Adrenal gland (tissue), 19 donors: ENCODE measurements at regions of chr15 and their contacts with region 1.

Region 1: DNA sequence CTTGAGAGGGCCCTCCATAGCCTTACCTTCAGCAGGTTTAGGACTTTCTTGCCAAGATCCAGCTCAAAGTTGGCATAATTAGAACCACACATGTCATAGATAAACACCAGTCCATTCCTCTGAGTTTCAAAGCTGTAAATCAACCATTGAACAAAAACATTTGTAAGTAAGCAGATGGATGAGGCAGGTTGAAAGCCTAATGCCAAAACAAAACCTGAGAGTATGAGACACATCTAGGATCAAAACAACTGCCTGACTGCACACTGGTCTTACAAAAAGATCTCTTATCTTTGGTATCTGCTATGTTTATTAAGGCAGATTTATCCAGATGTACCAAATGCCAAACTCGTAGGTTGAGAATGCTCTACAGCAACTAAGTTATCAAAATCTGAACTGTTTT is 61.9 kb downstream of the PTPN9 start:
- DNase-seq: no peak
- H3K4me3 ChIP-seq: no peak overlapping the region
- H3K27ac ChIP-seq: peak overlapping the region in 1 of 5 donors; percentile 25
- H3K4me1 ChIP-seq: no peaks in the 10 kb centered on the region
- H3K27me3 ChIP-seq: no peaks in the 10 kb centered on the region
- CTCF ChIP-seq: no peak
- POLR2A ChIP-seq: no peak

Region 2: DNA sequence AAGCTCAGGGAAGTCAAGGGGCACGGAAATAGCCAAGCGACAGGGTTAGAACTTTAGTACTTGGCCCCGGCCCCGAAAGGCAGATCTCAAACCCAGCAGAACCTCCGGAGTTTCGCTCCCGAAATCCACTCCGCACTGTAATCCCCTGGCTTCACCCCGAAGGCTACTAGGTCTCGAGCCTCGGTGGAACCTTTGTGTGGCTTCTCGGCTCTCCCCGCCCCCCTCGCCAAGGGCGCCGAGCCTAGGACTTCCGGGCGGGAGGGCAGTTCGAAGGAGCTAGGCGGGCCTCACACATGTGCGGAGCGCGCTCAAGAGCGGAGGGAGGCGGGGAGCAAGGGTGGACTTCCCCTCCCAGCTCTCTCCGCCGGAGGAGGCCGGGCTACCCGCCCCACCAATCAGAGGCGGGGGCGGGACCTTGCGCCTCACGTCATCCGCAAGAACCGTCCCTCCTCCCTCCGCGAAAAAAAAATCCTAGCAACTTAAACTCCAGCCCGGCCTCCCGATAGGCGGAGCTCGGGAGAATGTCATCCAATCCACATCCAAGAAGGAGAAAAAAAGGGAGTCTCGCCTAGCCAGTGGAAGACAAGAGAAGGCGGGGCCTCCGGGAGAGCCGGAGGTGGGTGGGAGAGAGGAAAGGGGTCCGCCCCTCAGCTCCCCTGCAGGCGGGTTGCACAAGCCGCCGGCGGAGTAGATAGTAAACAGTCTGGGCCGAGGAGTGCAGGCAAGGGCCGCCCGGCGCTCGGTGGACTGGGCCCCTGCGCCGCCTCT is 63.3 kb before region 1 on chr15:
- intact Hi-C with region 1: loop called in 1 of 2 experiments (anchors 10 kb)
- DNase-seq: peak; percentile 97 to 99 (median 99)
- H3K4me3 ChIP-seq: peak overlapping the region in 3 of 4 donors; percentile 16 to 81 (median 65)
- H3K27ac ChIP-seq: peak overlapping the region; percentile 90 to 98 (median 91)
- H3K4me1 ChIP-seq: peaks cover 24 to 30% of the 10 kb centered on the region in 2 donors
- H3K27me3 ChIP-seq: no peaks in the 10 kb centered on the region
- CTCF ChIP-seq: peak in 1 of 6 experiments; percentile 2
- POLR2A ChIP-seq: peak; percentile 41 to 84

Region 3: GRCh38 chr15:75801859-75802593 is 284.8 kb after region 1 on chr15:
- intact Hi-C with region 1: no loop called
- DNase-seq: peak; percentile 78 to 88 (median 84)
- H3K4me3 ChIP-seq: peak overlapping the region in 1 of 4 donors; percentile 27
- H3K27ac ChIP-seq: no peak overlapping the region
- H3K4me1 ChIP-seq: peaks cover 0 to 8% of the 10 kb centered on the region in 2 donors
- H3K27me3 ChIP-seq: peaks cover 17% of the 10 kb centered on the region
- CTCF ChIP-seq: peak; percentile 64 to 95 (median 84)
- POLR2A ChIP-seq: no peak